ENCODE measurements at regions of chr7 and their contacts with region 1.

Region 1: GRCh38 chr7:44477063-44477830 is 13.2 kb downstream of the NUDCD3 start:
- DNase-seq: peak in 8 of 10 donors; percentile 38 to 93 (median 64)

Region 2: DNA sequence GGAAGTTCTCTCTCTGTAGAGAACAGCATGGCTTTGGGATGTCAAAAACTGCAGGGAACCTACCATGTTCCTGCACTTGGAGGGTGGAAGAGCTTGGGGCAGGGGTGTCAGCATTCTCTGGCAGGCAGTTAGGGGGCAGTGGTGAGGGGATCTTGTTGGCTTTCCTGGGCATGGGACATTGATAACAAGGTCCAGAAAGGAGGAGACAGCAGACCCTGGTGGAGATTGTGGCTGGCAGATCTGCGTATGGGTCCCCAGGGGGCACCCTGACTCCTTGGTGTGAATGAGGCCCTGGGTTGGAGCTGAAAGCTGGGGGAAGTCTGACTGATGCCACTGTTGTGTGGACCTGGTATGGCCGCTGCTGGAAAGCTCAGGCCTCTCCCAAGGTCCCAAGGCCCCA is 128.9 kb before region 1 on chr7:
- intact Hi-C with region 1: no loop called
- DNase-seq: peak in 2 of 10 donors; percentile 62 to 72

Region 3: DNA sequence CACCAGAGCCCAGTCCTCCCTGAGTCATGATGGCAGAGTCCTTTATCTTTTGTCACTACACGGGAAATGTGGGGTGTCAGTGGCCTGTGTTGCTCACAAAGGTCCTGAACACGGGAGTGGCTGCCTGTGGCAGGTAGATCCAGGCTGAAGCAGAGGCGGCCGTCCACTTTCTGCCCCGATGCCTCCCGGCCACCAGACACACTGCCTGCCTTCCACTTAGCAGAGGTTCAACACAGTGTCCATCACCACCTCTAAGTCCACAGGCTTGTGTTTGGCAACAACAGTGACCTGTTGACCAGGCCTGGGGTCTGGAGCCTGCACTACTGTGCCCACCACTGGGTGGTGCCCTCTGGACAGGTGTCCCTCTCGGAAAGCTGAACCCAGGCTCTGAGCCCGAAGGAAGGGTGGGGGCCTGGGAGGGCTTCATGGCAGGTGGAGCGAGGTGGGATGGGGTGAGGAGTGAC is 102.0 kb before region 1 on chr7:
- intact Hi-C with region 1: loop called (anchors 5 kb)
- DNase-seq: peak in 2 of 10 donors; percentile 76 to 77